ACHN (cell line): ENCODE measurements at regions of chr2 and their contacts with region 1.

Region 1: DNA sequence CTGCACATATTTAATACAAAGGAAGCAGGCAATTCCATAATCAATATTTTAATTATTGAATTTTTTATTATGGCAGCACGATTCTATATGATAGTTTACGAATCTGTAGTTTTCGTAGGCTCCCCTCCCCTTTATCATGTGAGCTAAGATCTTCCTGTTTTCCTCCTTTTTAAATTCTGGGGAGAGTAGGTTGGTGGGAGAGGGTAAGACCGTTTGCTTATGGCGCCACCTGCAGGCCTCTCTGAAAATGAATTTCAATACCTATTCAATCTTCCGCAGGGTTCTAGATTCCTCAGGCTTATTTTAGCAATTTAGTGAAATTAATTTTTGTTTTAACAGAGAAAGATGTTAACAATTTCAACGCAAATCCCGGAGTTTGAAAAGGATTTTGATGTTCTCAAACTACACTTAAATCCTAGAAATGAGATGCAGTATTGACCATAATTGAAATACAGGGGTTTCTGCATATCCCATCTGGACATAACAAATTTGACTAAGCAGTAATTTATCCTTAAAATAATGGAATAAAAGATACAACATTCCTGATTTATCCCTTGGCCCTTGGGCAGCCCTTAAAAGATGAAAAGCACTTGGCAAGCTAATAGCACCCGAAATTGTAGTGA is 12.8 kb upstream of the GBX2 start:
- DNase-seq: peak; percentile 88

Region 2: GRCh38 chr2:235779444-235779896 is 401.5 kb before region 1 on chr2:
- in situ Hi-C with region 1: loop called (anchors 25 kb)
- DNase-seq: peak; percentile 83

Region 3: DNA sequence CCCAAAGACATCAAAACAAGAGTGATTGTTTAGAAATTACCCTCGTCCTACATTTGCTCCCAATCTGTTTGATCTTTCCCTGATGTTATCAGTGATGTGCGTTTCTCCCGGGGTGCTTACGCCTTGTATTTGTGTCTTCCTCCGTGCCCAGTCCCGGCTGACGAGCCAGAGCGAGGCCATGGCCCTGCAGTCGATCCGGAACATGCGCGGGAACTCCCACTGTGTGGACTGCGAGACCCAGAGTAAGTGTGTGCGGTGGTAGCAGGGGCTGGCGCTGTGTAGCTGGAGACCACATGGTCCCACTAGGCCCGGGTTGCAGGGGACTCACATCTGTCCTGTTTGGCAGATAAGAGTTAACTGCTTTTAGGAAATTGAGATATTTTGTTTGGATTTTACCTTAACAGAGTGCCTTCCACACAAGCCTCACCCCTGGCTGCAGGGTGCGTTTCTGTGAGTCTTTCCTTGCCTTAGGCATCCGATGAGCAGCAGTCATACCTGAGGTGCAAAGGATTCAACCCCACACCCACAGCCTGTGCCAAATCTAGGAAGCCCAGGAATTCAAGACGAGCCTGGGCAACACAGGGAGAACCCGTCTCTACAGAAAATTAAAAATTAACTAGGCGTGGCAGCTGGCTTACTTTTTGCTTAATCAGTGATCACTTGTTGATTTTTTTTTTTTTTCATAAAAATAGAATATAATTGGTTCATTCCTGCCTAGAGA is 140.2 kb before region 1 on chr2:
- in situ Hi-C with region 1: no loop called
- DNase-seq: no peak